Activated B cell treated with CpG ODN at 0.5 μM for 24 hours (primary cell): ENCODE measurements at regions of chr17 and their contacts with region 1.

Region 1: GRCh38 chr17:41026715-41027471 is at the start of gene KRTAP1-5:
- DNase-seq: no peak
- ATAC-seq: no peak
- H3K4me3 Mint-ChIP-seq: no peak within 1 kb of the TSS
- H3K27ac Mint-ChIP-seq: no peak within 1 kb of the TSS
- H3K4me1 Mint-ChIP-seq: no peaks in the 10 kb centered on the region
- H3K27me3 Mint-ChIP-seq: peaks cover 35% of the 10 kb centered on the region
- CTCF ChIP-seq: no peak
- total RNA-seq, gene KRTAP1-5: not detected in 2 replicates

Region 2: DNA sequence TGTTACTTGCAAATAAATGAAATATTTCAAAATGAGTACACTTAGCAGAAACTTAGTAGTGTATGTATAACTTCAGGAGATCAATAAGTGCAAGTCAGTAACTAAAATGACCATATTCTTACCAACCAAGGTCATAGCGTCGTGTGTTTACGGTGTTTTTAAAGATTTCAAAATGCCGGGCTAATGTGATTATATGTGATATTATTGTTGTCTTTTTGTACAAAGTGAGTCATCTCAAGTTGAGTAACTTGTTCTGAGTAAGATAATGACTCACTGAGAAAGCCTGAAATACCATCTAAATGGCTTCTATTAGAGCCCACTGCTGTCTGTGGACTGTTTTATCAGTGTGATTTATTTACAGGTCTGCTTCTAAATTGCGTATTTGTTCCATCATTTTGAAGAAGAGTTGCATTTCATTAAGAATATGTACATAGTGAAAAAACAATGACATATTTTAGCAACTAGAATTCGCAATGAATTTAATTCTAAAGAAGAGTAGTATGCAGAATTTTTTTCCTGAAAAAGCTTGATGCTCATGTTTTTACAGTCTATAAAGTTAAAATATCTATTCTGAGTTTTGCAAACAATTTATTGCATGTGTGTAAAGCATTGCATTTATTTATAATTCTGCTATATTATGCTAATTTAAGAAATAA is 172.6 kb before region 1 on chr17:
- CTCF ChIA-PET with region 1: no interaction called
- POLR2A ChIA-PET with region 1: no interaction called
- intact Hi-C with region 1: loop called (anchors 5 kb)
- DNase-seq: no peak
- ATAC-seq: no peak
- H3K4me3 Mint-ChIP-seq: no peak overlapping the region
- H3K27ac Mint-ChIP-seq: no peak overlapping the region
- H3K4me1 Mint-ChIP-seq: no peaks in the 10 kb centered on the region
- H3K27me3 Mint-ChIP-seq: peaks cover 20% of the 10 kb centered on the region
- CTCF ChIP-seq: no peak